CD8-positive, alpha-beta T cell (primary cell): ENCODE measurements at regions of chr2 and their contacts with region 1.

Region 1: DNA sequence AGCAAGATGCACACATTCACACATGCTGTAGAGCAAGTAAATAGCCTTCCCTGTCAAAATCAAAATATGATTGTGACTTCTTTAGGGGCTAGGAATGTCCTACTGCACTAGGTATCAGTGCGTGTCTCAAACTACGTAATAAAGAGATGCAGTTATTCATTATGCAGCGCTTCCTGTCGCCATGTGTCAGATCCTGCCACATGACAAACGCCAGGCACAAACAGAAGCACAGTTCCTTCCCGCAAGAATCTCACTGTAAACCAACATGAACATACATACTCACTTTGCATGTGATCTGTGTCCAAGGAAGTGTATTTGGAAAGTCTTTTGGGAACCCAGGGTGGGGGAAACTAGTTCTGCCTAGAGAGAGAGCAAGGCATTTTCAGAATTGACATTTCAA is 599.9 kb downstream of the RNF144A start:
- DNase-seq: peak in 8 of 9 experiments; percentile 4 to 83 (median 50)
- ATAC-seq: peak; percentile 95
- H3K4me3 ChIP-seq: peak overlapping the region in 1 of 2 experiments; percentile 23
- H3K4me3 Mint-ChIP-seq: peak overlapping the region; percentile 69
- H3K27ac ChIP-seq: peak overlapping the region; percentile 44 to 61
- H3K27ac Mint-ChIP-seq: peak overlapping the region; percentile 93
- H3K4me1 ChIP-seq: peaks cover 48% of the 10 kb centered on the region
- H3K4me1 Mint-ChIP-seq: peaks cover 58% of the 10 kb centered on the region
- H3K27me3 ChIP-seq: no peaks in the 10 kb centered on the region
- H3K27me3 Mint-ChIP-seq: no peaks in the 10 kb centered on the region
- CTCF ChIP-seq: no peak

Region 2: GRCh38 chr2:7467782-7468447 is 49.2 kb before region 1 on chr2:
- CTCF ChIA-PET with region 1: no interaction called
- POLR2A ChIA-PET with region 1: no interaction called
- intact Hi-C with region 1: loop called in 1 of 2 experiments (anchors 1 kb)
- DNase-seq: peak in 5 of 9 experiments; percentile 45 to 86 (median 72)
- ATAC-seq: peak; percentile 95
- H3K4me3 ChIP-seq: no peak overlapping the region
- H3K4me3 Mint-ChIP-seq: peak overlapping the region; percentile 26
- H3K27ac ChIP-seq: peak overlapping the region; percentile 24 to 60
- H3K27ac Mint-ChIP-seq: peak overlapping the region; percentile 88
- H3K4me1 ChIP-seq: peaks cover 31% of the 10 kb centered on the region
- H3K4me1 Mint-ChIP-seq: peaks cover 49% of the 10 kb centered on the region
- H3K27me3 ChIP-seq: no peaks in the 10 kb centered on the region
- H3K27me3 Mint-ChIP-seq: no peaks in the 10 kb centered on the region
- CTCF ChIP-seq: no peak

Region 3: DNA sequence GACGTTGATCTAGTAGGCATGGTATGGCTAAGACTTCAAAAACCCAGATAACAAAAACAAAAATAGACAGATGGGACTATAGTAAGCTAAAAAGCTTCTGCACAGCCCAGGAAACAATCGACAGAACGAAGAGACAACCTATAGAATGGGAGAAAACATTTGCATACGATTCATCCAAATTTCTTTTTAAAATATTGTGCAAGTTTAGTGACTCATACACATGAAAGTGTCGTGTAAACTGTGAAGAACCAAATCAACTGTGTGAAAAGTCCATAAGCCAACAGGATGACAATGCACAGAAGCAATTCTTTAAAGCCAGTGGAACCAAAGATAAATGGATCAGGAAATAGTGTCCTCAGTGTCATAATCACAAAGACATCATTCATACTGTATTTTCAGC is 71.2 kb after region 1 on chr2:
- CTCF ChIA-PET with region 1: no interaction called
- POLR2A ChIA-PET with region 1: no interaction called
- intact Hi-C with region 1: loop called in 1 of 2 experiments (anchors 2 kb)
- DNase-seq: no peak
- ATAC-seq: no peak
- H3K4me3 ChIP-seq: no peak overlapping the region
- H3K4me3 Mint-ChIP-seq: no peak overlapping the region
- H3K27ac ChIP-seq: no peak overlapping the region
- H3K27ac Mint-ChIP-seq: no peak overlapping the region
- H3K4me1 ChIP-seq: peaks cover 7% of the 10 kb centered on the region
- H3K4me1 Mint-ChIP-seq: peaks cover 17% of the 10 kb centered on the region
- H3K27me3 ChIP-seq: no peaks in the 10 kb centered on the region
- H3K27me3 Mint-ChIP-seq: no peaks in the 10 kb centered on the region
- CTCF ChIP-seq: no peak